Right lobe of liver (tissue), 6 donors: ENCODE measurements at regions of chr9 and their contacts with region 1.

Region 1: DNA sequence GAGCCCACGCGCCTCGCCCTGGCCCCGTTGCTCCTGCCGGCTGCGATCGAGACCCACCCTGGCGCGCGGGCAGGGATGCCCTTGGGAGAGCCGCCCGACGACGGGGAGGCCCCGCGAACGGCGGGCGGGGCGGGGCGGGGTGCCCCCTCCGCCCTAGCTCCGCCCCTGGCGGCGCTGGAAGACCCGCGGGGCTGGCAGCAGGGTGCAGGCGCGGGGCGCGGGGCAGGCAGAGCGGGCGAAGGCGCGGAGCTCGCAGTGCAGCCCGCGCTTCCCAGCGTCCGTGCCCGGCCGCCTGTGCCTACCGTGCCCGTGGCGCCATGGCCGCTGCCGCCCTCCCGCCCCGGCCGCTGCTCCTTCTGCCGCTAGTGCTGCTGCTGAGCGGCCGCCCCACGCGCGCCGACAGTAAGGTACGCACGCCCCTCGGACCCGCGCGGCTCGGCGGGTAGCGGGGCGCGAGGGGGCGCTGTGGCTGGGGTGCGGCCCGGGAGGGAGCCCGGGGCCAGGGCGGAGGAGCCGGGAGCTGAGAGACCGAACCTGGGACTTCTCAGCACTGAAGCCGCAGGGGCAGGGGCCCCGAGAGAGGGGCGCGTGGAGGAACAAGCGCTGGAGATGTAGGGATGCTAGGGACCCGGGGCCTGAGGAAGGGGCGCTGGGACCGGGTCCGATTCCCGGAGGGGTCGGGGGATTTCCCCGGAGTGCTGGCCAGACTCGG is at the start of gene OLFML2A:
- DNase-seq: peak in 1 of 3 donors; percentile 46
- ATAC-seq: peak; percentile 6 to 25 (median 22)
- H3K4me3 ChIP-seq: peak within 1 kb of the TSS; percentile 33 to 53 (median 41)
- H3K27ac ChIP-seq: no peak within 1 kb of the TSS
- H3K4me1 ChIP-seq: peaks cover 0 to 10% (median 0%) of the 10 kb centered on the region in 4 donors
- H3K27me3 ChIP-seq: no peaks in the 10 kb centered on the region
- CTCF ChIP-seq: peak in 3 of 4 donors; percentile 20 to 28 (median 21)
- POLR2A ChIP-seq: no peak
- total RNA-seq, gene OLFML2A: 0.12 to 0.74 (median 0.40) TPM

Region 2: DNA sequence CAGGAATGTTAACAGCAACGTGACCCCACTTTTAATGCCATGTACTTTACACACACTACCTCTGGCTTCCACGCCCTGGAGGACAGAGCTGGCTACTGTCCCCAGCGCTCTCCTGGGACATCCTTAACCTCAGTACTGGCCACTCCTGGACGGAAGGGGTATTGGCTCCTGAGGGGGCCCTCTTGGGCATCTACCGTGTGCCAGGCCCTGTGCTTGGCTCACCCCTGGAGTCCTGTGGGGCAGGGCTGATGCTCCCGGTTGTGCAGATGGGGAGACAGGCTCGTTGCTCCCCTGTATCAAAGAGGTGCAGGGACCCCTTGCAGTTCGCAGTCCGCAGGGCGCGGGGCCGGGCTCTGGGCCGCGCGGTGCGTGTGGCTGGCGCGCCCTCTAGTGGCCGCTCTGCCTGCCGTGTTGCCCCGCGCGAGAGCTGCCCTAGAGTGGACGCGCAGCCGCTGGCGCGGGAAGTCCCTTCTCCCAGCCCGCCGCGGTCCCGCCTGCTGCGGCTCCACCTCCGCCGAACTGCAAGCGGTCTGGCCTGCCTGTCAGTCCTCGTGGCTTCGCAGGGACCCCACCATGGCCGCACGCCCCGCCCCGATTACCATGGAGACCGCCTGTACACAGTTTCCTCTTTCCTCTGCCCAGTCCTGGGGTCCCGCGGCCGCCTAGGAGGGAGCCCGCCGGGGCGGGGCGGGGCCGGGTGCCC is 75.9 kb after region 1 on chr9 and contains the start of gene WDR38:
- intact Hi-C with region 1: loop called (anchors 5 kb)
- DNase-seq: peak; percentile 74 to 81 (median 80)
- ATAC-seq: peak; percentile 86 to 95 (median 89)
- H3K4me3 ChIP-seq: peak within 1 kb of the TSS; percentile 20 to 50 (median 46)
- H3K27ac ChIP-seq: no peak within 1 kb of the TSS
- H3K4me1 ChIP-seq: peaks cover 0 to 3% (median 0%) of the 10 kb centered on the region in 4 donors
- H3K27me3 ChIP-seq: no peaks in the 10 kb centered on the region
- CTCF ChIP-seq: peak; percentile 96 to 99 (median 98)
- POLR2A ChIP-seq: no peak
- total RNA-seq, gene WDR38: not detected

Region 3: DNA sequence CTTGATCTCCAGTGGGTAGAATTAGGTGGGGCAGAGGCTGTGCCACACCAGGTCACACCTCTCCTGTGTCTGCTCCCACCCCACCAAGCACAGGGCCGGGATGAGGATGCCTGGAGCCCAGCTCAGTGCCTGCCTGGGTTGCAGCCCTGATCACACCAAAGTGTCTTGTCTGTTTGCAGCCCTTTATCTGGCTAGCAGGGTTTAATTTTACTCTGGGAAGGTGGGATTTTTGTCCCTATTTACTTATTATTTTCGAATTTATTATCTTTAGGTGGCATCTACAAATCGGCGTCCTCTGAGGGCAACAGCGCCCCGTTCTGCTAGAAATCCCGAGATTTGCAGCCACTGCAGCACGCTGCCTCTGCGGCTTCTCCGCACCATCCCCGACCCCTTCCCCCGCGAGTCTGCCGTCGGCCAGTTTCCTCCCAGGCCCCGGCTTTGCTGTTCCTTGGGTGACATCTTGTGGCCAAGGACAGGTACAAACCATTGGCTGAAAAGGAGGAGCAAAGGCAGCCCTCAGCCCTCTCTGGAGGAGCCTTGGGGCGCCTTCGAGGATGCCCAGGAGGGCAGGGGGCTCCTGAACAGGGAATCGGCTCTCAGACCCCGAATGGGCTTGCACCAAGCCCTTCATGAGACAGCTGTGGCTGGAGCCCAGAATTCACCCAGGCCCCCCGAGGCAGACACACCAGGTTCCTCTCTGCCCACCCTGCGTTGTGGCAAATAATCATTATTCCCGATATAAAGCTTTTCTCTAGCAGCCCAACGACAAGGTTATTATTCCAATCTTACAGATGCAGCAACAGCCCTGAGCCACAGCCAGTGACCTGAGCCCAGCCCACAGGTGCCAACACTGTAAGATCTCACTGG is 597.6 kb after region 1 on chr9:
- intact Hi-C with region 1: loop called in 1 of 2 experiments (anchors 10 kb)
- DNase-seq: peak; percentile 55 to 75 (median 68)
- ATAC-seq: peak; percentile 88 to 96 (median 91)
- H3K4me3 ChIP-seq: peak overlapping the region in 2 of 3 donors; percentile 19 to 32
- H3K27ac ChIP-seq: no peak overlapping the region
- H3K4me1 ChIP-seq: no peaks in the 10 kb centered on the region
- H3K27me3 ChIP-seq: no peaks in the 10 kb centered on the region
- CTCF ChIP-seq: peak; percentile 63 to 78 (median 72)
- POLR2A ChIP-seq: no peak